PC-3 (cell line): ENCODE measurements at regions of chr14 and their contacts with region 1.

Region 1: GRCh38 chr14:100303177-100303576 is 3.1 kb downstream of the SLC25A29 start:
- DNase-seq: peak; percentile 21
- ATAC-seq: no peak
- H3K4me3 ChIP-seq: no peak overlapping the region
- H3K27ac ChIP-seq: peak overlapping the region; percentile 49
- H3K4me1 ChIP-seq: peaks cover 33% of the 10 kb centered on the region
- H3K27me3 ChIP-seq: no peaks in the 10 kb centered on the region
- CTCF ChIP-seq: peak; percentile 81

Region 2: DNA sequence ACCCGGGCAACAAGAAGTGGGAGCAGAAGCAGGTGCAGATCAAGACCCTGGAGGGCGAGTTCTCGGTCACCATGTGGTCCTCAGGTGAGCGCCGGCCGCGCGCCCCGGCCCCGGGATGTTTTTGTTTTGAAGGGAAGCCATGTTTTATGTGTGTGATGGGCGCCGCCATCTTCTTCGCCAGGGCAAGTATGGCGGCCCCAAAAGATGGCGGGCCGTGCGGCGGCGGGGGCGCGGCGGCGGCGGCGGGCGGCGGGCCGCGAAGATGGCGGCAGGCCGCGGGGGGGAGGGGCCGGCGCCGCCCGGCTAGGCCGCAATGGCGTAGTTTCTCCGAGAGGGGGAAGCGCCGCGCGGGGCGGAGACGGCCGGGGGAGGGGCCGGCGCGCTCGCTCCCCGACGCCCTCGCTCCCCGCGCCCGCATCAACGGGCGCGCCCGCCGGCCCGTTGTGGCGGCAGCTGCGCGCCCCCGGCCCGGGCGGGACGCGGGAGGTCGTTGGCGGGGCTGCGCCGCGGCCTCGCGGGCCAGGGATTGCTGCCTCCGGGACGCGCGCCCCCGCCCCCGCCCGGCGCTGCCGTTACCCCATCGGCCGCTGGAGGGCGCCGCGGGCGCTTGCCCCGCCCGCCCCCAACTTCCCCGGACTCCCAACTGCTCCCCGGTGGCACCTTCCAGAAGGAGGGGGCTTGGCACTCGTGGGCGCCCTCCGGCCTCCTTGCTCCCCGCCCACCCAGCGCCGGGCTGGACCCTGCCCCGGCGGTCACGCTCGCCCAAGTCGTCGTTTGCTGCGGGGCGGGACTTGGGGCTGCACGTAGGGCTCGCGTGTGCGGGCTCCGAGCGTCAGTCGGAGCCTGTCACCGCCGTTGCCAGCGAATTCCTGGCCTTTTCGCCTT is 63.1 kb before region 1 on chr14:
- CTCF ChIA-PET with region 1: interaction called, 11 read pairs
- POLR2A ChIA-PET with region 1: no interaction called
- intact Hi-C with region 1: no loop called
- DNase-seq: peak; percentile 78
- ATAC-seq: peak; percentile 27
- H3K4me3 ChIP-seq: peak overlapping the region; percentile 97
- H3K27ac ChIP-seq: peak overlapping the region; percentile 66
- H3K4me1 ChIP-seq: peaks cover 23% of the 10 kb centered on the region
- H3K27me3 ChIP-seq: no peaks in the 10 kb centered on the region
- CTCF ChIP-seq: peak; percentile 56

Region 3: DNA sequence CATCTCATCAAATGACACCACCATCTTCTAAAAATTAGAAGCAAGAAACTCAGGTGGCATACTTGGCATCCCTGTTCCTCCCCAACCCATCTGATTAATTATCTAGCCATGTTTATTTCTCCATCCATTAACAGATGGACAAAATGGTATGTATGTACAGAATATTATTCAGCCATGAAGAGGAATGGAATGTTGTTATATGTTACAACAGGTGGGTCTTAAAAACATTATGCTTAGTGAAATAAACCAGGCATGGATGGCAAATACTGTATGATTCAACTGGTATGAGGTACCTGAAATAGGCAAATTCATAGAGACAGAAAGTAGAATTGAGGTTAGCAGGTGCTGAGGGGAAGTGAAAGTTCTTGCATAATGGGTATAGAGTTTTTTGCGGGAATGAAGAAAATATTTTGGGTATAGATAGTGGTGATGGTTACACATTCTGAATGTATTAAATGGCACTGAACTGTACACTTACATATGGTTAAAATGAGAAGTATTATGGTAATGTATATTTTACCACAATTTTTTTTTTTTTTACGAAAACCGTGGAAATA is 46.8 kb before region 1 on chr14:
- CTCF ChIA-PET with region 1: no interaction called
- POLR2A ChIA-PET with region 1: no interaction called
- intact Hi-C with region 1: no loop called
- DNase-seq: no peak
- ATAC-seq: no peak
- H3K4me3 ChIP-seq: no peak overlapping the region
- H3K27ac ChIP-seq: no peak overlapping the region
- H3K4me1 ChIP-seq: no peaks in the 10 kb centered on the region
- H3K27me3 ChIP-seq: no peaks in the 10 kb centered on the region
- CTCF ChIP-seq: no peak

Region 4: GRCh38 chr14:100271247-100271939 is 31.8 kb before region 1 on chr14:
- CTCF ChIA-PET with region 1: no interaction called
- POLR2A ChIA-PET with region 1: no interaction called
- intact Hi-C with region 1: no loop called
- DNase-seq: peak; percentile 70
- ATAC-seq: peak; percentile 62; the same call in 1 of the 2 replicates
- H3K4me3 ChIP-seq: no peak overlapping the region
- H3K27ac ChIP-seq: no peak overlapping the region
- H3K4me1 ChIP-seq: no peaks in the 10 kb centered on the region
- H3K27me3 ChIP-seq: no peaks in the 10 kb centered on the region
- CTCF ChIP-seq: peak; percentile 64

Region 5: GRCh38 chr14:100285021-100285912 is 17.9 kb before region 1 on chr14:
- CTCF ChIA-PET with region 1: interaction called, 10 read pairs
- POLR2A ChIA-PET with region 1: no interaction called
- intact Hi-C with region 1: loop called (anchors 2 kb)
- DNase-seq: peak; percentile 73
- ATAC-seq: peak; percentile 78
- H3K4me3 ChIP-seq: peak overlapping the region; percentile 77
- H3K27ac ChIP-seq: peak overlapping the region; percentile 52; the same call in 1 of the 2 replicates
- H3K4me1 ChIP-seq: 0 out of 2 replicates have a peak, but pooled peaks cover 3% of the 10 kb centered on the region
- H3K27me3 ChIP-seq: no peaks in the 10 kb centered on the region
- CTCF ChIP-seq: peak; percentile 81

Region 6: DNA sequence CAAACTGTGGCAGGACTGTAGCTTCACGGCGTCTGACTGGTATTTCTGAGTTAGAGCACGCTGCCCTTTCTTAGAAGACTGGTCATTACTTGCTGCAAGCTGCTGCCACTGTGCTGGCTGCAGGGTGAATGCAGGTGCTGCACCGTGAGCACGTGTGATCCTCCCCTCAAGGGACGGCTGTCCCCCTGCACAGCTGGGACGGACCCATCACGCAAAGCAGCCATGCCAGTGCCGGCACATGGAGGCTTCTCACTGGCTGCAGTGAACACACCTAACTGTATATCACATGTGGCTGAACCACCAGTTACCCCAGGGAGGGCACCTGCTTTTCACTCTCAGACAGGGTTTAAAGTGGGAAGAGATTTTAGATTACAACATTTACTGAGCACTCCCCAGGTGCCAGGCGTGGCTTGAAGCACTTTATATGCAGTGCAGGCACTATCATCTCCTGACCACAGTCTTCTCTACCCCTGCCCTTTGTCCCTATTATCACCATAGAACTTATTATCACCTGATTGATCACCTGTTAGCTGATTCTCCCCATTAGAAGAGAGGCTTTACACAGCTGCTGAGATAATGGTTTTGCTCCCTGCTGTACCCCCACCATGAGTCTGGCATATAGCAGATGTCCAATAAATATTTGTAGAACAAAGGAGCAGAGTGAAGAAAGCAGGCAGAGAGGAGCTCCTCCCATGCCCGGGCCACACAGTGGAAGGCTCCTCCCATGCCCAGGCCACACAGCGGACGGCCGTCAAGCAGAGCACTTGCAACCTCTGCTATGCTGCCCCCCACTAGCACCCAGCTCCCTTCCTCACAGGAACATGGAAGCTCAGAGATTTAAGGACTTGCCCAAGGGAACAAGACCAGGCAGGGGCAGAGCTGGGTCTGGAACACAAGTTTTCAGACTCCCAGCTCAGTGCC is 45.9 kb after region 1 on chr14:
- CTCF ChIA-PET with region 1: no interaction called
- POLR2A ChIA-PET with region 1: no interaction called
- intact Hi-C with region 1: no loop called
- DNase-seq: no peak
- ATAC-seq: no peak
- H3K4me3 ChIP-seq: no peak overlapping the region
- H3K27ac ChIP-seq: no peak overlapping the region
- H3K4me1 ChIP-seq: no peaks in the 10 kb centered on the region
- H3K27me3 ChIP-seq: no peaks in the 10 kb centered on the region
- CTCF ChIP-seq: no peak